Left ventricle myocardium inferior (tissue), 1 donor: ENCODE measurements at regions of chr10 and their contacts with region 1.

Region 1: DNA sequence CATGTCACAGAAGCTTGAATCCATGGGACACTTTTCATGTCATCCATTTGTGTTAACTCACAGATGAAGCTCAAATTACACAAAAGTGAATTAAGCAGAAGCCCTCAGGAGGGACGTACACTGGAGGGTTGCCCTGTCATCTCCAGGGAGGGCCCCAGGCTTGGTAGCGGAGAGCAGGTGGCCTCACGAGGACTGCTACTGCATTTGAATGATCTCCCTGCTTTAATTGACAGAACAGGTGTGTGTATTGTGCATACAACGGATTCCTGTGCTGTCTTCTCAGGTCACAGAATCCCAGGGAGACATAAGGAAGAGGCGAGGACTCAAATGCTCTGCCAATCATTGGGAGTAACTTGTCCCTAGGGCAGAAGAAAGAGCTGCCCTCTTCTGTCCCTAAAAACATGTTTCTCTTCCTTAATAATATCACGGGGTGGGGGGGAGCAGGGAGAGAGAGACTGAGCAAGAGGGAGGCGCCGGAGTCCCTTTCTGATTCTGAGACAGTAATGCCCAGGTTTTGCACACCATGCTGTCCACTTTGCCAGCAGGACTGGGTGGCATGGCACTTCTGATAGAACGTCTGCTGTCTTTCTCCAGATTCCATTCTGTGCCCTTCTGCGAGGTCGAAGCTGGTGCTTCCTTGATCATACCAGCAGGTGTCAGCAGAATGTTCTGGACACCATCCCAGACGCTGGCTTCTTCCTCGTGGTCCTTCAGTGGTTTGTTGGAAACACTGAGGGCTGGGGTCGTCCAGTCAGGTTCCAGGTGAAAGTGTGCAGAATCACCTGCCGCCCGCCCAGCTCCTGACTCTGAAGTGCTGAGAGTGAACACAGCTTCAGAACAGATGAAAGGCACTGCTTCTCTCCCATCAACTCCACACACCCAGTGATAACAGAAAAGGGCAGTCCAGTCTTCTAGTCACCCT is 26.2 kb upstream of the RASGEF1A start:
- DNase-seq: no peak
- H3K4me3 ChIP-seq: no peak overlapping the region
- H3K27ac ChIP-seq: no peak overlapping the region
- H3K4me1 ChIP-seq: peaks cover 9% of the 10 kb centered on the region
- H3K27me3 ChIP-seq: peaks cover 87% of the 10 kb centered on the region
- CTCF ChIP-seq: peak; percentile 81

Region 2: GRCh38 chr10:43348511-43349312 is 55.7 kb after region 1 on chr10:
- intact Hi-C with region 1: loop called (anchors 10 kb)
- DNase-seq: peak; percentile 81
- H3K4me3 ChIP-seq: no peak overlapping the region
- H3K27ac ChIP-seq: no peak overlapping the region
- H3K4me1 ChIP-seq: peaks cover 9% of the 10 kb centered on the region
- H3K27me3 ChIP-seq: peaks cover 31% of the 10 kb centered on the region
- CTCF ChIP-seq: peak; percentile 94

Region 3: GRCh38 chr10:43461950-43462349 is 168.9 kb after region 1 on chr10:
- intact Hi-C with region 1: loop called (anchors 5 kb)
- DNase-seq: no peak
- H3K4me3 ChIP-seq: no peak overlapping the region
- H3K27ac ChIP-seq: no peak overlapping the region
- H3K4me1 ChIP-seq: no peaks in the 10 kb centered on the region
- H3K27me3 ChIP-seq: no peaks in the 10 kb centered on the region
- CTCF ChIP-seq: peak; percentile 78